ENCODE measurements at regions of chr12 and their contacts with region 1.

Region 1: DNA sequence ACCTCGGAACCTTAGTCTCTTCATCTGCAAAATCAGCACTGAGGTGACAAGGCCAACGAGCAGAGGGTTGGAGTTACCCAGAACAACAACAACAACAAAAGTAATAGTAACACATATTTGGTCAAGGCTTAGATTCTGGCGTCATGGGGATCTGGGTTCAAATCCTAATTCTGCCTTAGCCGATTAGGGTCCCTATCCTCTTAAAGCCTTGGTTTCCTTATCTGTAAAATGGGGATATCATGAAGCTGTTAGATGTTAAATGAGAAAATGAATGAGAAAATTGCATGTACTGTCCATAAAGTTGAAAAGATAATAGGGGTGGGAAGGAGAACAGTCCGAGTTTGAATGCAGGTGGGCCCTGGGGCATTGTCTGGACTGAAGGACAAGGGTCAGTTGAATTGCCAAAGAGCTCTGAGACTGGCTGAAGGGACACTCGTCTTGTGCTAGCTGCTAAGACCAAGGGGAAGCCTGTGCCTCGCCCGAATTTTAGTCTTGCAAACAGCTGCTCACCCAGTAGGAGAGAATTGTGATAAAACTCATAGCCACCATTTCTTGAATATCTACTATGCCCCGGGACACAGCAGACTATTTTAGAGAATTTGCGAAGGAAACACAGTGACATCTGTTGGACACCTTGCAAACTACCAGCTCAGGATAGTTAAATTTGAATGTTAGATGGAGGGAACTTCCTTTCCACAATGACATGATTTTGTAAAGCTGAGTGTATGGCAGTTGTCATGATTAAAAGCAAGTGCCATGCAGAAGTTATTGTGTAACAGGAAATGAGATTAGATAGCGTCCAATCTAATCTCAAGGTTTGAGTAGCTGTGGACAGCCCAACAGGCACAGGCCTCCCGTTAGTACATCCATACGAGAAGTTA is 6.8 kb upstream of the HNF1A start:
- DNase-seq: no peak

Region 2: DNA sequence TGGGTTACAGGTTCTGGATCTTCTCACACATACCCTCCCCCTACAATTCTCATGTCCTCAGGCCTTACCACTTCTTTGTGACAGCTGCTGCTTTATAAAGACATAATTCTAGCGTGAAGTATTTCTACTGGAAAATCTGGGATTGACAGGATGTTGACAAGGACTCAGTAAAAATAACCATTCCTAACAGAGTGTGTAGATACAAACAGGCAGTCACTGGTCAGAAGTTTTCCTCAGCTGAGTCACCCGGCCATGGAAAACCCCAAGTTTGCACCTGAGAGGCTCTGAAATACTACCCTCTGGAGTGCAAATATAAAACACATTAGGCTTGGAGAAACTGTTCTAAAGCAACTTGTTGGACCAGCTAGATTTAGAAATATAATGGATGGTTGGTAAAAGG is 121.8 kb before region 1 on chr12:
- intact Hi-C with region 1: loop called (anchors 5 kb)
- DNase-seq: no peak

Region 3: DNA sequence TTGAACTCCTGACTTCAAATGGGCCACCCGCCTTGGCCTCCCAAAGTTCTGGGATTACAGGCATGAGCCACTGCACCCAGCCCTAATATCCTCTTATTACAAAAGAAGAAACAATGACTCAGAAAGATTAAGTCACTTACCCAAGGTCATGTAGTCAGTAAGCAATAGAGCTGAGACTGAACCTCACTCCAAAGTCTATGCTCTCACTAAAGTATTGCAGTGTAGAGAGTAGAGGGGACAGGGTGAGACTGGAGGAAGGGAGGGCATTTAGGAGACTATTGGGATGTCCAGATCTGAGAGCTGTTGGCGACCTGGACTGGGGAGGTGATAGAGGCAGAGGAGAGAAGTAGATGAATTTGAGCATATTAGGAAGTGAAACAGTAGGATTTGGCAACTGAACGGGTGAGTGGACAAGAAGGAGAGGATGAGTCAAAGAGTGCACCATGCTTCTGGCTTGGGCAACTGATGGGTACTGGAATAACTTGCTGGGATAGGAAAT is 172.9 kb after region 1 on chr12:
- intact Hi-C with region 1: no loop called
- DNase-seq: no peak